Dorsolateral prefrontal cortex (tissue), 120 donors: ENCODE measurements at regions of chr7 and their contacts with region 1.

Region 1: DNA sequence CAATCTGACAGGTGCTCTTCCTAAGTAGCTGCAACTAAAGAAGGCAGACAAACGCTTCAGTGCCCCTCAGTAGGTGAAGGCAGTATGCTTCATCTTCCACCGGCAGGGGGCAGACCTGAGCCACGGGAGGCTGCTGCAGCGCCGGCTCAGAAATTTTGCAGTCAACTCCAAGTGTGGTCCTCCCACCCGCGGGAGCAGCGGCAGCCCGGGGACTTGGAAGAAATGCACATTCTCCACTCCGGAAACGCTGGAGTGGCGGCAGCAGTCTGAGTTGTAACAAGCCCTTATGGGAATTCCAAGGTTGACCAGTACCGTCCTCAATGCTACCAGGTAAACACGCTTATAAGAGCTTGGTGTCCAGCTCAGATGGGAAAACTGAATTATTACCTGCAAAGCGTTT is 3.4 kb downstream of the IGFBP3 start:
- DNase-seq: peak; percentile 62 to 88 (median 80)
- H3K4me3 ChIP-seq: peak overlapping the region in 27 of 59 donors; percentile 1 to 68 (median 21)
- H3K27ac ChIP-seq: no peak overlapping the region
- H3K27me3 ChIP-seq: peaks cover 0 to 65% (median 34%) of the 10 kb centered on the region in 45 donors
- CTCF ChIP-seq: peak; percentile 83 to 99 (median 96)

Region 2: GRCh38 chr7:46036882-46037281 is 119.2 kb after region 1 on chr7:
- intact Hi-C with region 1: no loop called
- DNase-seq: no peak
- H3K4me3 ChIP-seq: no peak overlapping the region
- H3K27ac ChIP-seq: no peak overlapping the region
- H3K27me3 ChIP-seq: peaks cover 0 to 32% (median 0%) of the 10 kb centered on the region in 45 donors
- CTCF ChIP-seq: no peak

Region 3: DNA sequence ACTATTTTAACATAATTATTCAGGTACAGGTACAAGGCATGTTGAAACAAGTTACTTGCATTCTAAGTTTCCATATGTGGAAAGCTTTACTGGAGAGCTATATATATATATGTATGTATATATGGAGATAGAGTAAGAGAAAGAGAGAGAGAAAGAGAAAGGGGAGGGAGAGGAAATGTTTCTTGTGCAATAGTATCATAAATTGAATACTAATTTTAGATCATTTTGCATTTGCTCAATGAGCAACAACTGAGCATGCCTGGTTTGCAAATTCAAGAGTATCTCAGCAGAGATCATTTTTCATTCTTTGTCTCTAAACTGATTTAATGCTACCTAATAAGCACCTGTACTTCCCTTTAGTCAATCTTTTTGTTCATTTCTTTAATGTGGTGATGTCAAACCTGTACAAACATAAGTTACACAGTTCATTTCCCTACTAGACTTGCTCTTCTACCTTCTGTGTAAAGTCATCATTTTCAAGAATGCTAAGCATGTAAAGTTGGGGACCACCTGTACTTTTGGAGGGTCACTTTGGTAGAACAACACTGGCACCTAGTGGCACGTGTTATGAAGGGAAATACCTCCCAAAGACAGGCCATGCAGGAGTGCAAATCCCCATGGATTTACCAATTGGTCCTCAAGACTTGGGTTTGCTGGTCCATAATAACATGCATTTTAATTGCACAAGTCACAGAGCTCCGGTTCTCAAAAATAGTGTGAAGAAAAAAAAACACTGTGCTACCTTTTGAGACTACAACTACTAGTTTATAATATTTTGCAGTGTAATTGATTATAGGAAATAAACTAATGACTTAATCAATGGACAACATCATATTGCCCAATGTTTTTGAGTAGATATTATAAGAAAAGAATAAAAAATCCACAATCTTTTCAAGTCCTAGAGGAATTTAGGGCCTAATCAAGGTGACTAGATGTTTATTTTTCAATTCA is 434.6 kb after region 1 on chr7:
- intact Hi-C with region 1: loop called (anchors 2 kb)
- DNase-seq: peak in 3 of 10 donors; percentile 8 to 52 (median 43)
- H3K4me3 ChIP-seq: no peak overlapping the region
- H3K27ac ChIP-seq: no peak overlapping the region
- H3K27me3 ChIP-seq: peaks cover 0 to 44% (median 4%) of the 10 kb centered on the region in 45 donors
- CTCF ChIP-seq: peak in 55 of 56 donors; percentile 19 to 74 (median 53)

Region 4: DNA sequence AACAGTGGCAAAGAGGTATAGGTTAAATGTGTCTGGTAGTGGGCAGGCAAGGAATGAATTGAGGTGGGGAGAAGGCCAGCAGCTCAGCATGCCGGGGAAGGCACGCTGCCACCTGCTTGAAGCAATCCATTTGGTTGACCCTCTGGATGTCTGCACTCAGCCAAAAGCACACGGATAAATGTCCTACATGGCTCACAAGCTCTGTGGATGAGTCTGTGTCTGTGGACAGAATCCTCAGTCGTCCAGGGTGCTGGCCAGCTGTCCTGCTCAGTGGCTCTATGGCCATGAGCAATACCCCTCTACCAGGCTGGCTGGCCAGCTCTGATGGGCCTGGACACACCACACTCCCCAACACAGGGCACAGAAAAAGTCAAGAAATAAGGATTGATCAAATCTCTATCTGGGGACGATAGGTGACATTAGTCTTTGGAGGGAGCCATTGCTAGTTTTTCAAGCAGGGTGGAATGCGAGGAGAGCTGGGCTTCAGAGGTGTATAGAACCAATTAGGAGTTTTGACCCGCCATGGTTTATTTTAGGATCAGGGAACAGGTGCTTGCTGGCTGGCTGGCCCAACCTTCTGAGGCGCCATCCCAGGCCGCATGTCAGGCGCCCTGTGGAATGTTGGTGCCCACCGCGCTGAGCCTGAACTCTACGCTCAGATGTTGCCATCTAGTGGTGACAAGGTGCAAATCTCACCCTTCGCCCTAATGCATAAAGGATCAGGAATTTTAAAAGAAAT is 1170.8 kb after region 1 on chr7:
- intact Hi-C with region 1: loop called (anchors 1 to 5 kb)
- DNase-seq: peak in 9 of 10 donors; percentile 30 to 76 (median 55)
- H3K4me3 ChIP-seq: no peak overlapping the region
- H3K27ac ChIP-seq: no peak overlapping the region
- H3K27me3 ChIP-seq: peaks cover 0 to 35% (median 4%) of the 10 kb centered on the region in 45 donors
- CTCF ChIP-seq: peak; percentile 76 to 98 (median 90)

Region 5: GRCh38 chr7:47179812-47180515 is 1262.3 kb after region 1 on chr7:
- intact Hi-C with region 1: loop called (anchors 2 kb)
- DNase-seq: peak in 7 of 10 donors; percentile 45 to 72 (median 56)
- H3K4me3 ChIP-seq: no peak overlapping the region
- H3K27ac ChIP-seq: no peak overlapping the region
- H3K27me3 ChIP-seq: peaks cover 0 to 6% (median 0%) of the 10 kb centered on the region in 45 donors
- CTCF ChIP-seq: peak; percentile 60 to 90 (median 76)

Region 6: DNA sequence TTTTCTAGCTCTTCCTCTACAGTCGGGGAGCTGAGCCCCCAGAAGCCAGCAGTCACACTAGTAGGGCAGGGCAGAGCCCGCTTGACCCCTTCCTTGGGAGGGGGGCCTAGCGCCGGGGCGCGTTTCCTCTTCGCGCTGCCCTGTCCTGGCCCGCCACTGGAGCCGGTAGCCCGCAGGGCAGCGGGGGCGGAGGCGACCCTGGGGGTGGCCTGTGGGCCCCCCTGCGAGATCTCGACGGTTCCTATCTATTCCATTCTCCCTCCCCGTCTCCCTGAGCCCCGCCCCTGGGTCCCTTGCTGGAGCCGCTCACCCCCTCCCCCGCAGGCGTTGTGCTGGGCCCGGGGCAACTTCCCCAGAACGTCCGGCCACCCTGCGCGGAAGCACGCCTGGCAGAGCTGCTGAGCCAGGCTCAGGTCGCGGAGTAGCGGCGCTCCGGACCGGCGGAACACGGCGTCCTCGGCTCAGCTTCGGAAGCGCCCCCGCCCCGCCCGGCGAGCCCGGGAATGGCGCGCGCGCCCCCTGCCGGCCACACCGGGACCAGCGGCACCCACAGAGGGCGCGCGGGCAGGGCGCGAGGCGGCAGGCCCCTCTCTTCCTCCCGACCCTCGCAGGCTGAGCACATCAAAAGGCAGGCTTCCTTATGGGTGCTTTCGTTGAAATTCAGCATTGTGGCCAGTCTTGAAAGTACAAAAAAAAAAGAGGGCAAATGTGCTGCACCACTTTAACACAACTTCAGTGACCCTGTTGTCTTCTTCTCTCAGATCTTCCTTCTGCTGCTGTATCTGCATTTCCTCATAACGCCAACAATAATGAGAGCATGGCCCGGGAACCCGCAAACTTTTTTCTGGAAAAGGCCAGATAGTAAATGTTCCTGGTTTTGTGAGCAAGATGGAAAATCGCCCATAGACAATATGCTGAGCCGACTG is 1336.7 kb after region 1 on chr7:
- intact Hi-C with region 1: loop called (anchors 5 to 10 kb)
- DNase-seq: peak; percentile 40 to 79 (median 60)
- H3K4me3 ChIP-seq: peak overlapping the region; percentile 52 to 80 (median 66)
- H3K27ac ChIP-seq: peak overlapping the region in 54 of 59 donors; percentile 5 to 89 (median 70)
- H3K27me3 ChIP-seq: peaks cover 0 to 6% (median 0%) of the 10 kb centered on the region in 45 donors
- CTCF ChIP-seq: peak; percentile 45 to 98 (median 86)